PC-9 (cell line): ENCODE measurements at regions of chr2 and their contacts with region 1.

Region 1: DNA sequence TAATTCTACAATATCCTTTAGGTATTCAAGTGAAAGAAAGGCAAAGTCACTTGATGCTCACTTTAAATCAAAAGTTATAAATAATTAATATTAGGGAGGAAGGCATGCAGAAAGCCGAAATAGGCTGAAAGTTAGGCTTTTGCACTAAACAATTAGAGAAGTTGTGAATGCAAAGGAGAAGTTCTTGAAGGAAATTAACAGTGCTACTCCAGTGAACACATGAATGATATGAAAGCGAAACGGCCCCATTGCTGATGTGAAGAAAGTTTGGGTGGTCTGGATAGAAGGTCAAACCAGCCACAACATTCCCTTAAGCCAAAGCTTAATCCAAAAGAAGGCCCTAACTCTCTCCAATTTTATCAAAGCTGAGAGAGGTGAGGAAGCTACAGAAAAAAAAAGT is 103.1 kb upstream of the CXCR4 start:
- DNase-seq: no peak
- H3K4me3 ChIP-seq: no peak overlapping the region
- H3K27ac ChIP-seq: no peak overlapping the region
- H3K4me1 ChIP-seq: no peaks in the 10 kb centered on the region
- H3K27me3 ChIP-seq: no peaks in the 10 kb centered on the region
- CTCF ChIP-seq: no peak

Region 2: GRCh38 chr2:136582628-136583205 is 361.7 kb after region 1 on chr2:
- CTCF ChIA-PET with region 1: interaction called, 20 read pairs
- POLR2A ChIA-PET with region 1: no interaction called
- intact Hi-C with region 1: no loop called
- DNase-seq: peak in 1 of 2 experiments; percentile 18
- H3K4me3 ChIP-seq: no peak overlapping the region
- H3K27ac ChIP-seq: no peak overlapping the region
- H3K4me1 ChIP-seq: no peaks in the 10 kb centered on the region
- H3K27me3 ChIP-seq: peaks cover 8% of the 10 kb centered on the region
- CTCF ChIP-seq: no peak